A673 (cell line): ENCODE measurements at regions of chr12 and their contacts with region 1.

Region 1: GRCh38 chr12:49347384-49348237 is 923 bp downstream of the DNAJC22 start:
- DNase-seq: peak; percentile 92
- H3K4me3 ChIP-seq: peak overlapping the region; percentile 51
- H3K27ac ChIP-seq: peak overlapping the region; percentile 15
- H3K4me1 ChIP-seq: peaks cover 33% of the 10 kb centered on the region
- H3K27me3 ChIP-seq: peaks cover 14% of the 10 kb centered on the region
- CTCF ChIP-seq: peak; percentile 99

Region 2: GRCh38 chr12:49288412-49288853 is 59.2 kb before region 1 on chr12:
- CTCF ChIA-PET with region 1: interaction called, 15 read pairs
- POLR2A ChIA-PET with region 1: no interaction called
- intact Hi-C with region 1: loop called (anchors 2 kb)
- DNase-seq: peak; percentile 68
- H3K4me3 ChIP-seq: no peak overlapping the region
- H3K27ac ChIP-seq: no peak overlapping the region
- H3K4me1 ChIP-seq: peaks cover 7% of the 10 kb centered on the region
- H3K27me3 ChIP-seq: no peaks in the 10 kb centered on the region
- CTCF ChIP-seq: peak; percentile 93

Region 3: GRCh38 chr12:49322708-49323523 is 24.7 kb before region 1 on chr12 and contains the start of gene TROAP:
- CTCF ChIA-PET with region 1: interaction called, 12 read pairs
- POLR2A ChIA-PET with region 1: no interaction called
- intact Hi-C with region 1: no loop called
- DNase-seq: peak; percentile 99
- H3K4me3 ChIP-seq: peak within 1 kb of the TSS; percentile 86
- H3K27ac ChIP-seq: peak within 1 kb of the TSS; percentile 86
- H3K4me1 ChIP-seq: peaks cover 13% of the 10 kb centered on the region
- H3K27me3 ChIP-seq: no peaks in the 10 kb centered on the region
- CTCF ChIP-seq: no peak
- total RNA-seq, gene TROAP: 121 and 124 TPM in 2 replicates

Region 4: DNA sequence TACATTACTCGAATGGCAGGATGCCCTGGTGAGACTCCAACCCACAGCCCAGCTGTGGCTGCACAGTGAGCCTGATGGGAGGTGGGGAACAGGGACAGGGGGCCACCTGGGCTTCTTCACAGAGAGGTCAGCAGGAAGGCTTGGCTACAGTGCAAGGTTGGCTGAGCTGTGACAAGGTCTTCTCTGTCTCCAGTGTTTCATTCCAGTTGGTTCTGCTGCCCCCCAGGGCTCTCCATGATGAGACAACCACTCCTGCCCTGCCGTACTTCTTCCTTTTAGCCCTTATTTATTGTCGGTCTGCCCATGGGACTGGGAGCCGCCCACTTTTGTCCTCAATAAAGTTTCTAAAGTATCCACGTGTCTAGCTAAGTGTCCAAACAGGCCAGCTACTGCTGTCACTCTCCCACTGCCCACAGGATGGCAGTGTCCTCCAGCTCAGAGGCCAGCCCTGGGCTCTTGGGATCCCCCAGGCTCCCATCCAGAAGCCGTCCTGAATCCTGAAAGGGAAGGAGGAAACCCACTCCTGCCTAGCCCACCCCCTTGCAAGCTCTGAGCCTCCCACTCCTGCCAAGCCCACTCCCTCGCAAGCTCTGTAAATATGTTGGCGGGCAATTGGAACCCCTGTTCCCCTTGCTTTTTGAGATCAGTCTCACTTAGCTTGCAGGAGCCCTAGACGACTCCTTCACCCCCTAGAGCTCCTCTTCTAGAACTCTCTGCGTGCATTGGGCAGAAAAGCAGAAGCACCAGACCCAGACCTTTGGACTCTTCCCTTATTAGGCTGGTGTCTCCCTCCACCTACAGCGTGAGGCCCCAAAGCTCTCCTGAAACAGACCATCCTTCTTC is 16.0 kb before region 1 on chr12:
- CTCF ChIA-PET with region 1: interaction called, 14 read pairs
- POLR2A ChIA-PET with region 1: no interaction called
- intact Hi-C with region 1: no loop called
- DNase-seq: peak; percentile 78
- H3K4me3 ChIP-seq: no peak overlapping the region
- H3K27ac ChIP-seq: no peak overlapping the region
- H3K4me1 ChIP-seq: no peaks in the 10 kb centered on the region
- H3K27me3 ChIP-seq: no peaks in the 10 kb centered on the region
- CTCF ChIP-seq: peak; percentile 74

Region 5: GRCh38 chr12:49336645-49337584 is 10.7 kb before region 1 on chr12 and contains the start of gene C1QL4:
- CTCF ChIA-PET with region 1: interaction called, 14 read pairs
- POLR2A ChIA-PET with region 1: no interaction called
- intact Hi-C with region 1: no loop called
- DNase-seq: peak; percentile 90
- H3K4me3 ChIP-seq: peak within 1 kb of the TSS; percentile 56
- H3K27ac ChIP-seq: no peak within 1 kb of the TSS
- H3K4me1 ChIP-seq: peaks cover 11% of the 10 kb centered on the region
- H3K27me3 ChIP-seq: no peaks in the 10 kb centered on the region
- CTCF ChIP-seq: peak; percentile 97
- total RNA-seq, gene C1QL4: 0.41 and 1.0 TPM in 2 replicates

Region 6: DNA sequence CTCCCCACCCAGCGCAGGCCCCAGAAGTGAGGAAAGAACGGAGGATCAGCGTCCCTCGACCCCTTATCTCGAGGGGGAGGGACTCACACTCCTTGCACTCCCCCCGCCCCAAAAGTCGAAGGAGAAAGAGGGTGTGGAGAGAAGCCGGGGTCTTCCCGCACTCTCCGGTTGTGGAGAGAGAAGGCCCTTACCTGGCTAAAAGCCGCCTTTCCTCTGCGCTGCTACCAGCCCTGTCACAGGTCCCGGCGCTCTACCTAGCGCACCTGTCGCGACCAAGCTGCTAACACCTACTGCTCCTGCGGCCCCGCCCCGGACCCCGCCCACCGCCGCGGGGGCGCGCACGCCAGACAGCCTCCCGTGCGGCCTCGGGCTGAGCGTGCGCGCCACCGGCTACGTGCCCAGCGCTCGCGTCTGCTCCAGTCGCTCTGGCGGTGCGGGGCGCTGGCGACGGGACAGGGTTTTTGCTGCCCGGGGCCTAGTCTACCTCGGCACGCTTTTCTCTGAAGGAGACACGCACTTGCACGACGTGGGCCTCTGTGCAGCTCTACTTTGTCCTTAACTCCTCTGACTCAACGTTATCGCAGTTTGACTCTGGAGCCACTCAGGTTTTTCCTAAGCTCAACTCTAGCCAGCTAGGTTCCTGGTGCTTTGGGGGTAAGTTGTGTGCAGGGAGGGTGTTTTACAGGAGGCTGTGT is 935.8 kb after region 1 on chr12 and contains the start of gene LIMA1:
- CTCF ChIA-PET with region 1: no interaction called
- POLR2A ChIA-PET with region 1: no interaction called
- intact Hi-C with region 1: no loop called
- DNase-seq: peak; percentile 92
- H3K4me3 ChIP-seq: peak within 1 kb of the TSS; percentile 78
- H3K27ac ChIP-seq: peak within 1 kb of the TSS; percentile 67
- H3K4me1 ChIP-seq: peaks cover 10% of the 10 kb centered on the region
- H3K27me3 ChIP-seq: no peaks in the 10 kb centered on the region
- CTCF ChIP-seq: no peak
- total RNA-seq, gene LIMA1: 73.1 and 77.6 TPM in 2 replicates